CD8-positive, alpha-beta memory T cell (primary cell): ENCODE measurements at regions of chr11 and their contacts with region 1.

Region 1: GRCh38 chr11:118051611-118052461 is 25.0 kb upstream of the TMPRSS4 start:
- DNase-seq: peak; percentile 55 to 88 (median 86)
- H3K4me3 ChIP-seq: peak overlapping the region; percentile 44
- H3K4me3 Mint-ChIP-seq: peak overlapping the region; percentile 6 to 87 (median 69)
- H3K27ac ChIP-seq: peak overlapping the region; percentile 29
- H3K27ac Mint-ChIP-seq: peak overlapping the region; percentile 88 to 99 (median 97)
- H3K4me1 ChIP-seq: peaks cover 63% of the 10 kb centered on the region
- H3K4me1 Mint-ChIP-seq: peaks cover 60 to 67% (median 65%) of the 10 kb centered on the region in 3 donors
- H3K27me3 ChIP-seq: no peaks in the 10 kb centered on the region
- H3K27me3 Mint-ChIP-seq: peaks cover 0 to 3% of the 10 kb centered on the region in 2 donors

Region 2: GRCh38 chr11:117817368-117818040 is 234.3 kb before region 1 on chr11:
- CTCF ChIA-PET with region 1: interaction called, 87 read pairs
- POLR2A ChIA-PET with region 1: interaction called, 8 read pairs
- DNase-seq: peak; percentile 69 to 88 (median 75)
- H3K4me3 ChIP-seq: no peak overlapping the region
- H3K4me3 Mint-ChIP-seq: peak overlapping the region in 4 of 7 donors; percentile 54 to 70 (median 56)
- H3K27ac ChIP-seq: no peak overlapping the region
- H3K27ac Mint-ChIP-seq: peak overlapping the region; percentile 74 to 93 (median 88)
- H3K4me1 ChIP-seq: peaks cover 56% of the 10 kb centered on the region
- H3K4me1 Mint-ChIP-seq: peaks cover 38 to 61% (median 47%) of the 10 kb centered on the region in 3 donors
- H3K27me3 ChIP-seq: no peaks in the 10 kb centered on the region
- H3K27me3 Mint-ChIP-seq: peaks cover 0 to 1% of the 10 kb centered on the region in 2 donors

Region 3: GRCh38 chr11:117843666-117844484 is 208.0 kb before region 1 on chr11:
- CTCF ChIA-PET with region 1: interaction called, 126 read pairs
- POLR2A ChIA-PET with region 1: interaction called, 8 read pairs
- DNase-seq: peak; percentile 64 to 87 (median 76)
- H3K4me3 ChIP-seq: no peak overlapping the region
- H3K4me3 Mint-ChIP-seq: no peak overlapping the region
- H3K27ac ChIP-seq: no peak overlapping the region
- H3K27ac Mint-ChIP-seq: no peak overlapping the region
- H3K4me1 ChIP-seq: peaks cover 8% of the 10 kb centered on the region
- H3K4me1 Mint-ChIP-seq: peaks cover 2 to 9% (median 4%) of the 10 kb centered on the region in 3 donors
- H3K27me3 ChIP-seq: no peaks in the 10 kb centered on the region
- H3K27me3 Mint-ChIP-seq: peaks cover 0 to 3% of the 10 kb centered on the region in 2 donors

Region 4: DNA sequence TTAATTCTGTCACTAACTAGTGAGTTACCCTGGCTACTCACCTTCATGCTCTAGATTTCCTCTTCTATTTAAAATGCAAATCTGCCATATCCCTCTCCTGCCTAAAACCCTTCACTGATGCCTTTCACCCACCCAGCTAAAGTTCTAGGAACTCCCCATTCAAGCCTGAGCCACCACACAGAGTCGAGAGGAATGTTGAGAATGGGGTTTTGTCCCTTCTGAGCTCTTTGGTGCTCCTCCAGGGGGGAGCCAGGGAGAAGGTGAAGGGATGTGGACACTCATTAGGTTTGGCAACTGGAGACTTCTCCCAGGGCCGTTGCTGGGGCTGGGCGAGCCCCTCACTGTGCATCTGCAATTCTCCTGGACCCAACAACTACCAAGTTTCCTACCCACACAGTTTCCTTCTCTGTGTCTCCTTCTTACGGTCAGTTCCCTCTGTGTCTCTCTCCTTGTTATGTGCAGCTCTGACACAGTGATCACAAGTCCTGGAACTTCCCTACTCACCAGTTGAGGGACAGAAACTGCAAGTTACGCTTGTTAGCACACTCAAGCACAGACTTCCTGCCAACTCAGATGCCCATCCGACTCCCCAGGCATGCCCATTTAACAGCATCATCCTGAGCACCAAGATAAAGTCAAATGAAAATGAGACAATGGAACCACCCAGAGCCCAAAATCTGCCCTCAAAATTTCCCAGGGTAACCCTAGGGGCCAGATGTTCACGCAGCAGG is 72.2 kb before region 1 on chr11:
- CTCF ChIA-PET with region 1: interaction called, 155 read pairs
- POLR2A ChIA-PET with region 1: no interaction called
- DNase-seq: no peak
- H3K4me3 ChIP-seq: no peak overlapping the region
- H3K4me3 Mint-ChIP-seq: peak overlapping the region; percentile 22 to 79 (median 59)
- H3K27ac ChIP-seq: no peak overlapping the region
- H3K27ac Mint-ChIP-seq: peak overlapping the region; percentile 59 to 89 (median 81)
- H3K4me1 ChIP-seq: peaks cover 56% of the 10 kb centered on the region
- H3K4me1 Mint-ChIP-seq: peaks cover 76 to 85% (median 84%) of the 10 kb centered on the region in 3 donors
- H3K27me3 ChIP-seq: no peaks in the 10 kb centered on the region
- H3K27me3 Mint-ChIP-seq: no peaks in the 10 kb centered on the region

Region 5: GRCh38 chr11:118002541-118003423 is 49.1 kb before region 1 on chr11:
- CTCF ChIA-PET with region 1: interaction called, 141 read pairs
- POLR2A ChIA-PET with region 1: interaction called, 158 read pairs
- DNase-seq: peak in 2 of 5 donors; percentile 37 to 62
- H3K4me3 ChIP-seq: peak overlapping the region; percentile 13
- H3K4me3 Mint-ChIP-seq: peak overlapping the region; percentile 48 to 85 (median 60)
- H3K27ac ChIP-seq: peak overlapping the region; percentile 72
- H3K27ac Mint-ChIP-seq: peak overlapping the region; percentile 88 to 100 (median 94)
- H3K4me1 ChIP-seq: peaks cover 93% of the 10 kb centered on the region
- H3K4me1 Mint-ChIP-seq: peaks cover 94 to 100% (median 98%) of the 10 kb centered on the region in 3 donors
- H3K27me3 ChIP-seq: no peaks in the 10 kb centered on the region
- H3K27me3 Mint-ChIP-seq: no peaks in the 10 kb centered on the region

Region 6: DNA sequence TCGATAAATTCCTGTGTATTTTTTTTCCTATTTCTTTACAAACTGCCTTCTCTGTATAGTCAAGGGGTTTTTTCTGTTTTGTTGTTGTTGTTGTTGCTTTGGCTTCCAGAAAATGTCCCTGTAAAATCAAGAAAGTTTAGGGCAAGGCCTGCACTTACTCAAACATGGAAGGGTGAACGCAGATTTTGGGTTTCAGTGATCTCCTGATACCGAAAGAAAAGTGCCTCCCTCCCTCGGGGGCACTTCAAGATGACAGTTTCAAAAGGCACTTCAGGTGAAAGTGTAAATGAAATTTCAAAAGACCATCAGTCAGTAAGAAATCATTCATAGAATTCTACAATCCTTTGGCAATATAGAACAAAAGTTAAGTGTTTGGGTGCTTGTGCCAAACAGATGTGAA is 18.4 kb before region 1 on chr11:
- CTCF ChIA-PET with region 1: interaction called, 11 read pairs
- POLR2A ChIA-PET with region 1: interaction called, 6 read pairs
- DNase-seq: no peak
- H3K4me3 ChIP-seq: no peak overlapping the region
- H3K4me3 Mint-ChIP-seq: peak overlapping the region in 3 of 7 donors; percentile 8 to 33 (median 16)
- H3K27ac ChIP-seq: no peak overlapping the region
- H3K27ac Mint-ChIP-seq: peak overlapping the region in 5 of 8 donors; percentile 23 to 76 (median 64)
- H3K4me1 ChIP-seq: peaks cover 7% of the 10 kb centered on the region
- H3K4me1 Mint-ChIP-seq: peaks cover 40 to 67% (median 59%) of the 10 kb centered on the region in 3 donors
- H3K27me3 ChIP-seq: no peaks in the 10 kb centered on the region
- H3K27me3 Mint-ChIP-seq: no peaks in the 10 kb centered on the region

Region 7: DNA sequence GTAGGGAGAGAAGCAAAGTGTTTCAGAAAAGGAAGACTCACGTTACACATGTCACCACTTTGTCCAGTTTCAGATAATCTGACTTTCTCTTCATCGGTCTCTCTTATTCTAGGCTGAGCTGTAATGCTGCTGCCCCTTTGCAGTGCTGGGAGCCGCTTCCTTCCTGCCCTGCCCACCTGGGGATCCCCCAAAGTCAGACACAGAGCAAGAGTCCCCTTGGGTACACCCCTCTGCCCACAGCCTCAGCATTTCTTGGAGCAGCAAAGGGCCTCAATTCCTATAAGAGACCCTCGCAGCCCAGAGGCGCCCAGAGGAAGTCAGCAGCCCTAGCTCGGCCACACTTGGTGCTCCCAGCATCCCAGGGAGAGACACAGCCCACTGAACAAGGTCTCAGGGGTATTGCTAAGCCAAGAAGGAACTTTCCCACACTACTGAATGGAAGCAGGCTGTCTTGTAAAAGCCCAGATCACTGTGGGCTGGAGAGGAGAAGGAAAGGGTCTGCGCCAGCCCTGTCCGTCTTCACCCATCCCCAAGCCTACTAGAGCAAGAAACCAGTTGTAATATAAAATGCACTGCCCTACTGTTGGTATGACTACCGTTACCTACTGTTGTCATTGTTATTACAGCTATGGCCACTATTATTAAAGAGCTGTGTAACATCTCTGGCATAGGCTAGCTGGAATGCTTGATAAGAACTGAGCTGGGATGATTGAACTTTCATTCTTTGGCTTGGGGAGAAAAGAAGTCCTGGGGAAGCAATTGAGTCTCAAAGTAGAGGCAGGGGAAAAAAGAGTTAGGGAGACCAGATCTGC is 66.2 kb after region 1 on chr11:
- CTCF ChIA-PET with region 1: no interaction called
- POLR2A ChIA-PET with region 1: no interaction called
- DNase-seq: peak in 1 of 5 donors; percentile 1
- H3K4me3 ChIP-seq: no peak overlapping the region
- H3K4me3 Mint-ChIP-seq: no peak overlapping the region
- H3K27ac ChIP-seq: no peak overlapping the region
- H3K27ac Mint-ChIP-seq: peak overlapping the region in 4 of 8 donors; percentile 8 to 65 (median 32)
- H3K4me1 ChIP-seq: no peaks in the 10 kb centered on the region
- H3K4me1 Mint-ChIP-seq: peaks cover 10 to 31% (median 30%) of the 10 kb centered on the region in 3 donors
- H3K27me3 ChIP-seq: no peaks in the 10 kb centered on the region
- H3K27me3 Mint-ChIP-seq: peaks cover 9 to 15% of the 10 kb centered on the region in 2 donors

Region 8: GRCh38 chr11:118128721-118129470 is 77.1 kb after region 1 on chr11:
- CTCF ChIA-PET with region 1: no interaction called
- POLR2A ChIA-PET with region 1: no interaction called
- DNase-seq: no peak
- H3K4me3 ChIP-seq: no peak overlapping the region
- H3K4me3 Mint-ChIP-seq: no peak overlapping the region
- H3K27ac ChIP-seq: no peak overlapping the region
- H3K27ac Mint-ChIP-seq: no peak overlapping the region
- H3K4me1 ChIP-seq: no peaks in the 10 kb centered on the region
- H3K4me1 Mint-ChIP-seq: no peaks in the 10 kb centered on the region
- H3K27me3 ChIP-seq: no peaks in the 10 kb centered on the region
- H3K27me3 Mint-ChIP-seq: peaks cover 18% of the 10 kb centered on the region in 2 donors

Region 9: GRCh38 chr11:118171269-118172062 is 119.6 kb after region 1 on chr11:
- CTCF ChIA-PET with region 1: interaction called, 10 read pairs
- POLR2A ChIA-PET with region 1: no interaction called
- DNase-seq: peak; percentile 51 to 76 (median 62)
- H3K4me3 ChIP-seq: no peak overlapping the region
- H3K4me3 Mint-ChIP-seq: no peak overlapping the region
- H3K27ac ChIP-seq: no peak overlapping the region
- H3K27ac Mint-ChIP-seq: peak overlapping the region in 1 of 8 donors; percentile 19
- H3K4me1 ChIP-seq: peaks cover 8% of the 10 kb centered on the region
- H3K4me1 Mint-ChIP-seq: peaks cover 0 to 4% (median 4%) of the 10 kb centered on the region in 3 donors
- H3K27me3 ChIP-seq: no peaks in the 10 kb centered on the region
- H3K27me3 Mint-ChIP-seq: peaks cover 11 to 22% of the 10 kb centered on the region in 2 donors